IMR-90 (cell line): ENCODE measurements at regions of chr12 and their contacts with region 1.

Region 1: DNA sequence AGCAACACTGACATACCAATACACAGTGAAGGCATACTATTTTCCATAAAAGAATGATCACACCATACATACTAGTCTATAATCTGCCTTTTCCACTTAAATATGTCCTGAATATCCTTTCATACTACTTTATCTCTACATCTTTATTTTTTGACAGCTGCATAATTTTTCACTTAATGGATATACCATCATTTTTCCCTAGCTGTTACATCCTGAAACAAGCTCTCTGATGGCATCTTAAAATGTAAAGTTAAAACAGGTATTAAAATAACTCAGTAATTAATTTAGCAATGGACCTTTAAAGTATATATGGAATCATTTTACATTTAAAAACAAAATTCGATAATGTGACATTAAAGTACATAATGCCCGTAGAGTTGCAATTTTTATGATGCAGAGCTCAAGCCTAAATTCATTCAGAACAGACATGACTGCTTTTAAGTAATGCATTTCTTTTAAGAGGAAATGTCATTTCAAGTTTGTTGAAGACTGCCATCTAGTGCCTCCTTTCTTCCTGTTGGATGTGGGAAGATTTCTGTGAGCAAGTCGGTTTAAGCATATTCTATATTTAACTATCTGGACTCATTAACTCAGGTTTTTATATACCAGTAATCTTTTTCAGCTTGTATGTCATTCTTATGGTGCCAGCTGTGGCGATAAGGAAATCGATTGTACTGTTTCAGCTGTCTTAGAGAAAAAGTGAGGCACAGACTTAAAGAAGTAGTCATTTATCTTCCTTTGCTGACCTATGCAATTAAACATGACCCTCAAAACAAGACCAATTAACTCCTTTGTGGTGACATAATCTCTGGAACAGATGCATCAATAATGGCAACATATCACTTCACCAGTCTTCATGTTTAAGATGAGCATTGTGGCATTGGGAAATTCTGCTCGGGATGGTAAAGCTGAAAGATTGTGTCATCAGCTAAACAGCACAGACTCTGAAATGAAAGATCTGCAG is 20.3 kb downstream of the PRICKLE1 start:
- DNase-seq: peak; percentile 80
- ATAC-seq: peak; percentile 25; the same call in 1 of the 2 replicates
- H3K4me3 ChIP-seq: no peak overlapping the region
- H3K27ac ChIP-seq: no peak overlapping the region
- H3K4me1 ChIP-seq: peaks cover 20% of the 10 kb centered on the region
- H3K27me3 ChIP-seq: no peaks in the 10 kb centered on the region
- CTCF ChIP-seq: peak; percentile 69
- POLR2A ChIP-seq: no peak
- RAD21 ChIP-seq: peak; percentile 60

Region 2: DNA sequence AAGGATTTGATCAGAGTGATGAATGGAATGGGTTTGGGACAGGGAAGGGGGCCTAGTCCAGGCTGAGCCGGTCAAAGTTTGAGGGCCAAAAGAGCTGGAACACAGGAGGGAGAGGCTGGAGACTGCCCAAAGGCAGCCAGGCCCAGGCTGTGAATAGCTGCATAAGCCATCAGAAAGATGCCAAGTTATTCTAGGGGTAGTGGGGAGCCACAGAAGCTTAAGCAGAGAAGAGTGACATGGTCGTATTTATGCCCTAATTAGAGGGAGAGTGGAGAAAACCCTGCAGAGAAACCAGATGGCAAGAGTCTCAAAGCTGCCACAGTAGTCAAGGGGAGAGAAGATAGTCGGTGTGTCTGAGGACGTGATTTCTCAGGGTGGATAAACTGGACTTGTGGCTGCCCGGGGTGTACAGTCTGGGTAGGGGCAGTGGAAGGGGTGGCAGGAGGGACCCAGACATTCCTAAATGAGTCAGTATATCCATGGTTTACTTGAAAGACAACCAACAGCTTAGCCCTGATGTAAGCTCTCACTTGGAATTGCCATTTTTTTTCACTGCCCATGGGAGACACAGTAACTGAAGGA is 78.9 kb before region 1 on chr12:
- CTCF ChIA-PET with region 1: interaction called, 22 read pairs
- POLR2A ChIA-PET with region 1: no interaction called
- dilution Hi-C with region 1: no loop called
- in situ Hi-C with region 1: loop called (anchors 5 kb)
- intact Hi-C with region 1: no loop called
- DNase-seq: no peak
- ATAC-seq: 0 out of 2 replicates have a peak, but pooled peaks have one; percentile 14
- H3K4me3 ChIP-seq: no peak overlapping the region
- H3K27ac ChIP-seq: no peak overlapping the region
- H3K4me1 ChIP-seq: no peaks in the 10 kb centered on the region
- H3K27me3 ChIP-seq: no peaks in the 10 kb centered on the region
- CTCF ChIP-seq: no peak
- POLR2A ChIP-seq: no peak
- RAD21 ChIP-seq: no peak

Region 3: DNA sequence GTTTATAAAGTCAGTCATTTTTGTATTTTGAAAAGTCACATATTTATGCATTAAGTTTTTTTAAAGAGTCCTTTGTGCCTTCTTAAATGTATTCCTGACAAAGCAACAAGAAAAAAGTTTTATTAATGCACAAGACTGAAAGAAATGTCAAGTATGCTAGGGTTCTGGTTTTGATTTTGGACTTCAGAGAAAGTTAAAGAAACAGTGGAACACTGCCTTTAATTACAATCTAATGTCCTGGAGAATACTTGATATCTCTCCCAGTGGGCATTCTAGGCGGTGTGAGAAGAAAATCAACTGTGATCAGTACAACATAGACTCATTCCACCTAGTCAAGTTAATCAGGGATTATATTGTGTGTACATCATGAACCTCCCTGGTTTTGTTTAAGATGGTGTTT is 29.5 kb before region 1 on chr12:
- CTCF ChIA-PET with region 1: no interaction called
- POLR2A ChIA-PET with region 1: no interaction called
- dilution Hi-C with region 1: no loop called
- in situ Hi-C with region 1: no loop called
- intact Hi-C with region 1: no loop called
- DNase-seq: no peak
- ATAC-seq: no peak; the same call in 1 of the 2 replicates
- H3K4me3 ChIP-seq: no peak overlapping the region
- H3K27ac ChIP-seq: no peak overlapping the region
- H3K4me1 ChIP-seq: no peaks in the 10 kb centered on the region; the same call in 1 of the 2 replicates
- H3K27me3 ChIP-seq: no peaks in the 10 kb centered on the region
- CTCF ChIP-seq: no peak
- POLR2A ChIP-seq: no peak
- RAD21 ChIP-seq: no peak